Activated CD4-positive, alpha-beta T cell treated with anti-CD3 and anti-CD28 coated beads for 36 hours (primary cell): ENCODE measurements at regions of chr9 and their contacts with region 1.

Region 1: DNA sequence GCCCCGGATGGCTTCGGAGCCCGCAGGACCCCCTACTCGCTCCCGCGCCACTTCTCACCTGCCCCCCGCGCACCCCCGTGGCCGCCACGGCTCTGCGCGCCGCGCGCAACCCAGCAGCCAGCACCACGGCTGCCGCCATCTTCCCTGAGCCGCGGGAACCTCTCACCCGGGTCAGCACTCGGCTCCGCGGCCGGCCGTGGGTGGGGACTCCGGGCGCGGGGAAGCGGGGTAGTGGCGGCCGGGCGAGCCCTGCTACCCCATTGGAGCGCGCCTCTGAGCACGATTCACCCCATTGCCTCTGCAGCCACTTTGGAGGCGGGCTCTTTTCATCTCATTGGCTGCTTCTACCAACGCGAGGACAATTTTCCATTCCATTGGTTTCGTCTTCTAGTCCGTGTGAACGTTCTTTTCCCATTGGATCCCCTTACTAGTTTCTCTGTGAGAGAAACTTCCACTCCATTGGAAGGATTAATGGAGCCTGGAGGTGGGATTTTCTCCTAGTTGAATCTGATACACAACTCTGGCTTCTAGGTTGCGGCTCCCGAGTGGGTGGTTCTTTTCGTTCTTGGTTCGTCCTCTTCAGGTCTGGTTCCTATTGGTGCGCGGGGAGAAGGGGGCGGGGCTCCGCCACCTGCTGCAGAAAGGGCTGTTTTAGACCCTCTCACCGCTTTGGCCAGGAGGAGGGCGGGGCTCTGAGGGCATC is at the start of gene HINT2:
- DNase-seq: peak; percentile 99
- ATAC-seq: peak; percentile 85
- H3K4me3 Mint-ChIP-seq: peak within 1 kb of the TSS; percentile 93
- H3K27ac Mint-ChIP-seq: peak within 1 kb of the TSS; percentile 98
- H3K4me1 Mint-ChIP-seq: peaks cover 33% of the 10 kb centered on the region
- H3K27me3 Mint-ChIP-seq: no peaks in the 10 kb centered on the region
- total RNA-seq, gene HINT2: 47.4 to 61.1 TPM

Region 2: DNA sequence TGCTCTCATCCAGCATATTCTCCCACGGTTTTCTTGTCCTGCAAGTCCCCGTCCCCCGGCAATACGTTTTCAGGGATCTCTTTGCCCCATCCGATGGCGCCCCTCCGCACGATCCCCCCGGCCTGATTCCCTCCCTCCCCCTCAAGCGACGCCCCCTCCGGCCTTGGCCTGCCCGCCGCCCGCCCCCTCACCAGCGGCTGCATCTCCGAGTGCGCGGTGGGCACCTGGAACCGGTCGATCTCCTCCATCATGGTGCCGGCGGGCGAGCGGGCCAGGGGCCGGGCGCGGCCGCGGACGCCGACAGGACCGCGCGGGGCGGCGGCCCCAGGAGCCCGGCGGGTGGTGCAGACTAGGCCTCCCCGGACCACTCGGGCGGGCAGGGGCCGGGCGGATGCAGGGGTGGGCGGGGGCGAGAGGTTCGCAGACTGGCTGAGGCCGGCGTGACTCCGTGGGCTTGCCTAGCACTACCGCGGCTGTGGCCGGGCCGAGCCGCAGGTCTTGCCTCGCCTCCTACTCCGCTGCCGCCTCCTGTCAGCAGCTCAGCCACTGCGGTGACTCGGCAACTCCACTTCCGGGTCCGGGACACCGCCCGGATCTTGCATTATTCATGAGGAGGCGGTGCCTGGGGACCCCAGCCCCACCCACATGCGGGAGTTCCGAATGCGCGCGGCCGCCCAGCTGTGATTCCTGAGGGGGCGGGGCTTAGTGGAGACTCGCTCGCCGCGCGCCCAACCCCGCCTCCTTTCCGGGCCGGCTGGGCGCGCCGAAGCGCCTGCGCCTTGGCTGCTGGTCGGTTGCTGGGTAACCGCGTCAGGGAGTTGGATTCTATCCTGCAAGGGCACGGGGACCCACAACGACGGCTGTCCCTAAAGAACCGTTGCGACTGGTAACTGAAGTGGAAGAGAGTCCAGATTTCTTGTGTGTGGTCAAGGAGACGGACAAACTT is 1356.7 kb before region 1 on chr9 and contains the starts of genes DNAI1 and FAM219A:
- CTCF ChIA-PET with region 1: no interaction called
- POLR2A ChIA-PET with region 1: no interaction called
- intact Hi-C with region 1: loop called in 1 of 2 experiments (anchors 5 kb)
- DNase-seq: peak; percentile 99
- ATAC-seq: peak; percentile 92
- H3K4me3 Mint-ChIP-seq: peak within 1 kb of the TSS; percentile 84
- H3K27ac Mint-ChIP-seq: peak within 1 kb of the TSS; percentile 75
- H3K4me1 Mint-ChIP-seq: peaks cover 45% of the 10 kb centered on the region
- H3K27me3 Mint-ChIP-seq: peaks cover 9% of the 10 kb centered on the region
- total RNA-seq, gene DNAI1: 0.34 TPM in 1 of 2 experiments, not detected in the other
- total RNA-seq, gene FAM219A: 9.7 to 12.9 TPM

Region 3: DNA sequence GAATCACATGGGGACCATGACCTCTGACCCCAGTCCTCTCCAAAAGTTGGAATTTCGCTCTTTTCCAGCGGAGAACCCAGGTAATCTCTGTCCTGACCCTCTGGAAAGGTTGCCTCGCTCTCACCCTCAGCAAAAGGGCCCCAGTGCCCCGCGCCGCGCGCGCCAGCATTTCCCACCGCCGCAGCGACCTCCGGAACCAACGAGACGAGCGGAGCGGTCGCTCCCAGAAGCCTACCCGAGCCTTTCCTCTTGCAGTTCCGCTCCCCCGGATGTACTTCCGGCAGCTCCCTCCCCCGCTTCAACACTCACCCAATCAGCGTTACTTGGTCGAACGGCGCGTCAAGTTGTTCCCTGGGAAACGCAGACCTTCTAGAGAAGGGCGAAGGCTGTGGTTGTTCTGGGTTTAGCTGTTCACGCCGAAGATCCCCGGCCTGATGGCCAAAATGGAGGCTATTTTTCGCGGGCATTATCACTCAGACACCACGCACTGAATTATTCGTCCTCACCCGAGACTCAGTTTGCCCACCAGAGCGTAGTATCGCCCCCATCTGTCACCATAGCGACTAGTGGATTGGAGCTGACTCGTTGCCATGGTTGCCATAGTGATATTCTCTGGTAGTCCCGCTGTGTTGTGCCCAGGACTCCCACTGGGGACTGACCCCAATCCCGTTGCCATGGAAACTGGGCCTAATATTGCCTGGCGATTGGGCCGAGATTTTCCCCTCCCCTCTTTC is 711.9 kb before region 1 on chr9 and contains the start of gene STOML2:
- CTCF ChIA-PET with region 1: no interaction called
- POLR2A ChIA-PET with region 1: no interaction called
- intact Hi-C with region 1: loop called in 1 of 2 experiments (anchors 2 kb)
- DNase-seq: peak; percentile 95
- ATAC-seq: peak; percentile 99
- H3K4me3 Mint-ChIP-seq: peak within 1 kb of the TSS; percentile 98
- H3K27ac Mint-ChIP-seq: peak within 1 kb of the TSS; percentile 98
- H3K4me1 Mint-ChIP-seq: peaks cover 25% of the 10 kb centered on the region
- H3K27me3 Mint-ChIP-seq: no peaks in the 10 kb centered on the region
- total RNA-seq, gene STOML2: 169 to 201 TPM

Region 4: DNA sequence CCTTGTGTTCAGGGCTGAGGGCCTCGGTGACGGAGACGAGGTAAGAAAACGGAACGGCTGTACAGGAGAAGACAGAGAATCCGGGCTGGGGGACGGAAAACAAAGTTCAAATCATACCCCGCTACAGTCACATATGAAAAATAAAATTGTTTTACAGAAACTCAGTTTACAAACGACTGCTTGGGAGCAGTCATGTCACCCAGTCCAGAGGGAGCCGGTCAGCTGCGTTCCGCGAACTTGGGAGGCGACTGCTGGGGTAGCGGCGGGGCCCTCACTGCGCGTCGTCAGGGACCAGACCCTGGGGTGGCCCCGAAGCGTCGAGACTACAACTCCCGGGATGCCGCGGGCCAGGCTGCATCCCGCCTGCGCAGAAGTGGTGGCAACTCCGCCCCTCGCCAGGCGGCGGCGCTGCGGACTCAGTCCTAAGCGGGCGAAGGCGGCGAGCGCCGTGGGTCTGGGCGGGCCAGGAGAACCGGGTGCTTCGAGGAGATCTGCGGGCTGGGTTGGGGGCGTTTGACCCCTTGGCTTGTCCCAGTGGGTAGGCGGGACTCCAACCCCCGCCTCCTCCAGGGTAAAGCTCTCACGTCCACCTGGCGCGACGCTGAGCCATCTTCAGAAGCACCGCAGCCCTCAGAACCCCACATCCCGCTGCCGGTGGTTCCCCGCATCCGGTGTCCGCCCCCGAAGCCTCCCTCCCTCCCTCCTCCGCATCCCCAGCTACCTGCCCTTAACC is 168.3 kb before region 1 on chr9:
- CTCF ChIA-PET with region 1: interaction called, 3 read pairs
- POLR2A ChIA-PET with region 1: no interaction called
- intact Hi-C with region 1: loop called in 1 of 2 experiments (anchors 1 kb)
- DNase-seq: peak; percentile 96
- ATAC-seq: peak; percentile 84
- H3K4me3 Mint-ChIP-seq: peak overlapping the region; percentile 91
- H3K27ac Mint-ChIP-seq: peak overlapping the region; percentile 97
- H3K4me1 Mint-ChIP-seq: peaks cover 51% of the 10 kb centered on the region
- H3K27me3 Mint-ChIP-seq: no peaks in the 10 kb centered on the region

Region 5: DNA sequence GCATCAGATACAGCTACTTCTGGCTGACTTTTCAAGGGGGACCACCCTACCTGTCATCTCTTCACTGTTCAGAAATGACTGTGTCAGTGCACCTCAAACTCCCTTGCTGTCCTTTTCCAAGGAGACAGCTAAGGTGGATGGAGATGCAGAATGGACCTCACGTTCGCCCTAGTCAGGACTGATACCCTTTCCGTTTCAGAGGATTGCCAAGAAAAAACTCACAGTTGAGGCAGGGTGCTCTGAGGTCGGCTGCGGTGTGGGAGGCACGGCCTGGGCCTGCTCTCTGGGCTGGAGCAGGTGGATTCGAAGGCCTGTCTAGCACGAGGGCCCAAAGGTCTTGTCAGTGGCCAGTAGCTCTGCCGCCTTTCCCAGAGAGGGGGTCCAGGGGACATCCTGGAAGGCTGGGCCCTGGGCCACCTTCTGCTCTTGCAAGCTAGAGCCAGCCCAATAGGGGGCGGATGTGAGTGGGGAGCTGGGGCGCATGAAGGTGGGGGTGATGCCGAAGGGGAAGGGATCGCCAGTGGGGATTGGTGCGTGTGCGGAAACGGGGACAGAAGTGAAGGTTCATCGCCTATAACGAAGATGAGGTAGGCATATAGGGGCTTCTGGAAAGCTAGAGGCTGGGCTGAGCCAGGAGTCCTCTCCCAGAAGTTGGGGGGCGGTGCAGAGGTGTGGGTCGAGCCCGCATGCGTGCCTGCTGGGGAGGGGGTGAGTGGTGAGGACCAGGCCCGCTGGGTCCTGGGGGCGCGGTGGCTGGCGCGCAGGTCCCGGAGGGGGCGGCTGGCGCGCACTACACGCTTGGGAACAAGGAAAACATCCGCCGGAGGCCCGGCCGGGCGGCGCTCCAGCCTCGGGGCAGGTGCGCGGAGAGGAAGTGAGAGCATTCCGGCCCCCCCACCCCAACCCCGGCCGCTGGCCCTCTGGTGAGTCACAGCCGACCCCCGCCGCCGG is 58.4 kb before region 1 on chr9:
- CTCF ChIA-PET with region 1: interaction called, 10 read pairs
- POLR2A ChIA-PET with region 1: no interaction called
- intact Hi-C with region 1: loop called (anchors 1 to 2 kb)
- DNase-seq: peak; percentile 92
- ATAC-seq: peak; percentile 92
- H3K4me3 Mint-ChIP-seq: peak overlapping the region; percentile 97
- H3K27ac Mint-ChIP-seq: peak overlapping the region; percentile 94
- H3K4me1 Mint-ChIP-seq: peaks cover 34% of the 10 kb centered on the region
- H3K27me3 Mint-ChIP-seq: no peaks in the 10 kb centered on the region

Region 6: DNA sequence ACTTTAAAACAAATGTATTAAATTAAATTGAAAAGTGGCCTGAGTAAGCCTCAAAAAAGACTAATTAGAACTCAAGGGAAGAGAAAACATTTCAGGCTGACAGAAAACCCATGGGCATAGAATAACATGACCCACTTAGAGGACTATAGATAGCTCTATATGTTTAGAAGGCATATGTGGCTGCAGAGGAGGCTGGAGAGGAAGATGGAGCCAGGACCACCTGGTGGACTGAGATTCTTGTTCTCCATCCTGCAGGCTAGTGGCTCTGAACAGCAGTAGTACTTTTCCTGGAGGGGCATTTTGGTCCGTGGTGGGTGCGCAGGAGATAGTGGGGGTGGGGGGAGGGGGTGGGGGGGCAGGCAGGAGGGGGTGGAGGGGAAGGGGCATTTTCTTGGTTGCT is 33.9 kb before region 1 on chr9:
- CTCF ChIA-PET with region 1: no interaction called
- POLR2A ChIA-PET with region 1: no interaction called
- intact Hi-C with region 1: no loop called
- DNase-seq: no peak
- ATAC-seq: no peak
- H3K4me3 Mint-ChIP-seq: no peak overlapping the region
- H3K27ac Mint-ChIP-seq: no peak overlapping the region
- H3K4me1 Mint-ChIP-seq: no peaks in the 10 kb centered on the region
- H3K27me3 Mint-ChIP-seq: no peaks in the 10 kb centered on the region

Region 7: GRCh38 chr9:36036780-36037548 is 222.0 kb after region 1 on chr9 and contains the start of gene RECK:
- CTCF ChIA-PET with region 1: no interaction called
- POLR2A ChIA-PET with region 1: no interaction called
- intact Hi-C with region 1: loop called in 1 of 2 experiments (anchors 1 kb)
- DNase-seq: peak; percentile 95
- ATAC-seq: peak; percentile 96
- H3K4me3 Mint-ChIP-seq: peak within 1 kb of the TSS; percentile 83
- H3K27ac Mint-ChIP-seq: peak within 1 kb of the TSS; percentile 85
- H3K4me1 Mint-ChIP-seq: peaks cover 41% of the 10 kb centered on the region
- H3K27me3 Mint-ChIP-seq: no peaks in the 10 kb centered on the region
- total RNA-seq, gene RECK: 5.0 to 5.6 TPM

Region 8: GRCh38 chr9:37465249-37466036 is 1650.5 kb after region 1 on chr9 and contains the start of gene ZBTB5:
- CTCF ChIA-PET with region 1: no interaction called
- POLR2A ChIA-PET with region 1: no interaction called
- intact Hi-C with region 1: loop called in 1 of 2 experiments (anchors 10 kb)
- DNase-seq: peak; percentile 99
- ATAC-seq: peak; percentile 85
- H3K4me3 Mint-ChIP-seq: peak within 1 kb of the TSS; percentile 97
- H3K27ac Mint-ChIP-seq: peak within 1 kb of the TSS; percentile 96
- H3K4me1 Mint-ChIP-seq: peaks cover 30% of the 10 kb centered on the region
- H3K27me3 Mint-ChIP-seq: no peaks in the 10 kb centered on the region
- total RNA-seq, gene ZBTB5: 8.0 to 9.1 TPM